MCF 10A (cell line): ENCODE measurements at regions of chr20 and their contacts with region 1.

Region 1: DNA sequence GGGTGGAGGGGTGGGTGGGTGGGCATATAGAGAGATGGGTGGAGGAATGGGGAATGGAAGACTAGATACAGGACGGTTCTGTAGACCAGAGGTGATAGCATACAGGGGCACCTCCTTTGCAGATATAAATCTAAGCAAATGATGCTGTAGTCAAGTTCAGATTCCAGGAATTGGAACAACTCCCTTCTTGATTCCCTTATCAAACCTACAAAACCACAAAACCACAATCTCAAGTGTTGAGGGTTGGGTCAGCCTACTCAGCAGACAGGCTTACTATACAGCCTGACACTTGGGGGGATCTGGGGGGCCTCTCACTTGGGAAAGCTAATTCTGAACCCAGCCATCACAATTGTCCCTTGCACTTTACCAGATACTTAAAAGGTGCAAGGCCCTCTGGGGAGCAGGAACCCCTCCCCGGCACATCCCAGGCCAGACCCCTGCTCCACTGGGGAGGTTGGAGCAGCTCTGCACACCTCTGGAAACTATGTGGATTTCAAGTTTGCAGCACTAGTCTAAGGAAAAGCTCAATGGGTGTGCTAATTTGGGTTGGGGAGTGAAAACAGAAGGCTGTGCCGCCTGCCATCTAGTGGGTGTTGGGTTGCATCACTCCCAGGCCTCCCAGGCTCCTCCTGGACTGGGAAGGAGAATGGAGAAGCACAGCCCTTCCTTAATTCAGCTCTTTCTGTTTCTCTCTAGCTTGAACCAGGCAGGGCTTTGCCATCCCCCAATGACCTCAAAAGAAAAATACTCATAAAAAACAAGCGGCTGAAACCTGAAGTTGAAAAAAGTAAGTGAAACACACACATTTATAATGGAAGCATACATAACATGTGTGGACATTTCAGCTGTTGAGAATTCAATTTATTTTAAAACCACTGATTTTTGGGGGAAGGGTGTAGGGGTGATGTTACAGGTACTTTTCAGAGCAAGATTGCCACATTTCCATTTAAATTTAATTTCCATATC is 121.2 kb upstream of the LAMP5 start:
- DNase-seq: peak; percentile 76
- H3K4me3 Mint-ChIP-seq: no peak overlapping the region
- H3K27ac Mint-ChIP-seq: no peak overlapping the region
- H3K4me1 Mint-ChIP-seq: no peaks in the 10 kb centered on the region
- H3K27me3 Mint-ChIP-seq: no peaks in the 10 kb centered on the region
- CTCF ChIP-seq: peak; percentile 71

Region 2: DNA sequence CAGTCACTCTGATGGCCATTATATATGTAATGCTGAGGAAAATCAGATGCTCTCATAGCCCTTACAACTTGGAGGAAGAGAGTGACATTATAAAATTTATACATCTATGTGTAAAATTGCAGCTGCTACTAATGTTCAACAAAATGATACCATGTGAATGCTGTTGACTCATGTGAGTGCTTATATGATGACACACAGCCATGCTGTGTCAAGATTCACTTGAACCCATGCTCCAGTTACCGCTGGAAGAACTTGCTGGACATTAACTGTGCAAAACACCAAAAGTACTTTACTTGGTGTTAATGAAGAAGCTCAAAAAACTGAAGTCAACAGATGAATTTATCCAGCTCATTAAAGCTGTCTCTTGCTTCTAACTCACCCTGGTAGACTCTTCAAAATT is 643.2 kb before region 1 on chr20:
- CTCF ChIA-PET with region 1: interaction called, 18 read pairs
- POLR2A ChIA-PET with region 1: no interaction called
- intact Hi-C with region 1: no loop called
- DNase-seq: no peak
- H3K4me3 Mint-ChIP-seq: no peak overlapping the region
- H3K27ac Mint-ChIP-seq: no peak overlapping the region
- H3K4me1 Mint-ChIP-seq: peaks cover 5% of the 10 kb centered on the region
- H3K27me3 Mint-ChIP-seq: no peaks in the 10 kb centered on the region
- CTCF ChIP-seq: no peak

Region 3: DNA sequence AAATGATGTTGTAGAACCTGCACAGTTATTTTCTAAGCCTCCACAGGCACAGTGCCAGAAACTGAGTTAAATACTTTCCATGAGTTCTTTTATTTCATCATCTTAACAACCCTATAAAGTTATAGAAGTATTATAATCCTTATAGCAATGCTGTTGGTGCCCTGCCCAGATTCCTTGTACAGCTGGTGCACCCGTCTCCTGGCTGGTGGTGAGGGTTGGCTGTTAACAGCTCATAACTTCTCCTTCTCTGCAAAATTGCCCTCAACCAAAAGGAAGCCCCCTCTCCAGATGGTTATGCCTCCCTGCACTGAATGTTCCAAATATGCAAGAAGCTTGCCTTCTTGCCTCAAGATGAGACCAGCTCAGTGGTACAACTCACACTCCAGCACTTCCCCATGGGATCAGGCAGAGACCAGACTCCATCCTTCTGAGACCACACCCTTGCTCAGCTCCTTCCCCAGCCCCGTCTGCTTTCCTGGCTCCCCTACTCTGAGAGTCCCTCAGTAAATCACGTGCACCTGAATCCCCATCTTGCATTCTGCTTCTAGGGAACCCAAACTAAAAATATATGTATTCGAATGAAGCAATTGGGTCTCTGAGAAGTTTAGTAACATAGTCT is 628.7 kb before region 1 on chr20:
- CTCF ChIA-PET with region 1: interaction called, 52 read pairs
- POLR2A ChIA-PET with region 1: interaction called, 4 read pairs
- intact Hi-C with region 1: loop called (anchors 1 kb)
- DNase-seq: peak; percentile 67
- H3K4me3 Mint-ChIP-seq: no peak overlapping the region
- H3K27ac Mint-ChIP-seq: no peak overlapping the region
- H3K4me1 Mint-ChIP-seq: peaks cover 7% of the 10 kb centered on the region
- H3K27me3 Mint-ChIP-seq: no peaks in the 10 kb centered on the region
- CTCF ChIP-seq: no peak

Region 4: DNA sequence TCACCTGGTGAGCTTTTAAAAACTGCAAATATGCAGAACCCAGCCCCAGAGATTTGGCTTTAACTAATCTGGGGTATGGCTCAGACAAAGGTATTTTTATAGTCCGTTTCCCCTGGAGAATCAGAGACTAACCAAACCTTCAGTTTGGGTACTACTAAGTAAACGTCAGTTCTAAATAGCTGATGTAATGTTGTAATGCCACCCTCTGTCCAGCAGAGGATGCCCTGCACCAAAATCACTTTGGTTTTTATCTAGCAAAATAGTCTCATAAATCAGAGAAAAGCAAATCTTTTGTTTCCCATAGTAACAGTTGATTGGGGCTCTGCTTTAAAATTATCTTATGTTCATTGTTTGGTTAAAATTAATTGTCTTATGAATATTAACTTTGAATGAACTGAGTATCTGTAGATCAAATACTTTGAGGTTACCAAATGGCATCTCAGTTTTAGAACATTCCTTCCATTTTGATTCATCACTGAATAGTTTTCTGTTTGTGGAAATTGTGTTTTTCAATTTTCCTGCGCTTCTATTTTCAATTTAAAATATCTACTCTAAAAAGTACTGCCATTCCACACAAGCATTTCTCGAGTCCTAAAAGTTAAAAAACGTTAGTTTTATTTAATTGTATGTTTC is 602.6 kb before region 1 on chr20:
- CTCF ChIA-PET with region 1: interaction called, 77 read pairs
- POLR2A ChIA-PET with region 1: no interaction called
- intact Hi-C with region 1: loop called (anchors 1 kb)
- DNase-seq: peak; percentile 69
- H3K4me3 Mint-ChIP-seq: no peak overlapping the region
- H3K27ac Mint-ChIP-seq: no peak overlapping the region
- H3K4me1 Mint-ChIP-seq: no peaks in the 10 kb centered on the region
- H3K27me3 Mint-ChIP-seq: peaks cover 26% of the 10 kb centered on the region
- CTCF ChIP-seq: peak; percentile 95

Region 5: DNA sequence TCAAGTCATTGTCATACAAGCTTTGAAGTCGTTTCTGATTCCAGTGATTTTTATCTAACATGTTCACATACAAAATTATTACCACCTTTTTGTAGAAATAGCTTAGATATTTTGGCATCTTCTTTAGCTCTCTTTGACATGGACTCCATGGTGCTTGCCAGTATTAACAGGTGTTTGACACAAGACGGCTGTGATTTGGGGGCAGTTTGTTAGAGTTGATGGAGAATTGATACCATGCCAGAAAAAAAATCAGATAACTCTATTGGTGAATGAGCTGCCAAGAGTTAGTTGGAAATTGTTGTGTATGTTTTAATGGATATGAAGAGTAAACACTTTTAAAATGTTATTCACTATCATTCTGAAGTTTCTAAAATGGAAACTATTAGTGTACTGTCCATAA is 25.4 kb before region 1 on chr20:
- CTCF ChIA-PET with region 1: interaction called, 21 read pairs
- POLR2A ChIA-PET with region 1: interaction called, 3 read pairs
- intact Hi-C with region 1: no loop called
- DNase-seq: no peak
- H3K4me3 Mint-ChIP-seq: no peak overlapping the region
- H3K27ac Mint-ChIP-seq: no peak overlapping the region
- H3K4me1 Mint-ChIP-seq: no peaks in the 10 kb centered on the region
- H3K27me3 Mint-ChIP-seq: no peaks in the 10 kb centered on the region
- CTCF ChIP-seq: no peak

Region 6: DNA sequence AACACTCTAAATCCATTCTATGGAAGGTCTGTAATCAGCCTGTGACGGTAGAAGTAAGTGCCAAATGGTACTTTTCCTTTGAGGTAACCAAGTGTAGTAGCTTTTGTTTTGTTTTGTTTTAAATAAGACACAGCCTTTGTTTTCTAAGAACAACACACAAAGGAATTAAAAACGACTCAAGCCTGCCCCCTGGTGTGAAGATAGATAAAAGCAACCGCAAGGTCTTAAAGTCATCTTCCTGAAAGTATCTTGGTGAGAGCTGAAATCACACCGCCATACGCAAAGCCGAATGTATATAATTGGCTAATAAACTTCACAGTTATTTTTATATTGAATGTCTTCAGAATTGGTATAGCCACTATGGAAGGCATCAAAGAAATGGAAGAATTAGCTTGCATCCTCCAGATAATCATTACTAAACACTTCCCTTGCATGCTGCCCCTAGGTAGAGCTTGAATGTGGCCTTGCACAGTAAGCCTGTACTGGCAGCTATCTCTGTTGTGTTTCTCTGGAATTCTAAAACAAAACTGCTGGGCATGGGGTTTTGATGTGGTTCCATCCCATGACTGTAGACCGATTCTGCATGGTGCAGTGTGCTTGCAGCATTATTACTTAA is 216.8 kb after region 1 on chr20:
- CTCF ChIA-PET with region 1: interaction called, 22 read pairs
- POLR2A ChIA-PET with region 1: interaction called, 3 read pairs
- intact Hi-C with region 1: no loop called
- DNase-seq: peak; percentile 82
- H3K4me3 Mint-ChIP-seq: no peak overlapping the region
- H3K27ac Mint-ChIP-seq: no peak overlapping the region
- H3K4me1 Mint-ChIP-seq: no peaks in the 10 kb centered on the region
- H3K27me3 Mint-ChIP-seq: peaks cover 17% of the 10 kb centered on the region
- CTCF ChIP-seq: peak; percentile 49